ENCODE measurements at regions of chr4 and their contacts with region 1.

Region 1: GRCh38 chr4:81471588-81472288 is at the start of gene RASGEF1B:
- DNase-seq: peak; percentile 95 to 97 (median 96)
- H3K4me3 ChIP-seq: peak within 1 kb of the TSS; percentile 83 to 94
- H3K4me3 Mint-ChIP-seq: peak within 1 kb of the TSS; percentile 90 to 97 (median 95)
- H3K27ac ChIP-seq: peak within 1 kb of the TSS; percentile 83
- H3K27ac Mint-ChIP-seq: peak within 1 kb of the TSS; percentile 91 to 99 (median 98)
- H3K4me1 ChIP-seq: peaks cover 22% of the 10 kb centered on the region
- H3K4me1 Mint-ChIP-seq: peaks cover 25 to 47% (median 37%) of the 10 kb centered on the region in 4 donors
- H3K27me3 ChIP-seq: no peaks in the 10 kb centered on the region
- H3K27me3 Mint-ChIP-seq: no peaks in the 10 kb centered on the region
- total RNA-seq, gene RASGEF1B: 9.0 to 9.4 TPM

Region 2: GRCh38 chr4:80713409-80713808 is 758.3 kb before region 1 on chr4:
- CTCF ChIA-PET with region 1: no interaction called
- POLR2A ChIA-PET with region 1: no interaction called
- intact Hi-C with region 1: no loop called
- DNase-seq: no peak
- H3K4me3 ChIP-seq: no peak overlapping the region
- H3K4me3 Mint-ChIP-seq: no peak overlapping the region
- H3K27ac ChIP-seq: no peak overlapping the region
- H3K27ac Mint-ChIP-seq: no peak overlapping the region
- H3K4me1 ChIP-seq: peaks cover 5% of the 10 kb centered on the region
- H3K4me1 Mint-ChIP-seq: peaks cover 10 to 19% (median 13%) of the 10 kb centered on the region in 4 donors
- H3K27me3 ChIP-seq: no peaks in the 10 kb centered on the region
- H3K27me3 Mint-ChIP-seq: peaks cover 0 to 2% of the 10 kb centered on the region in 2 donors

Region 3: GRCh38 chr4:81494031-81494431 is 22.3 kb after region 1 on chr4:
- CTCF ChIA-PET with region 1: interaction called, 60 read pairs
- POLR2A ChIA-PET with region 1: interaction called, 103 read pairs
- intact Hi-C with region 1: loop called (anchors 1 kb)
- DNase-seq: peak in 2 of 5 donors; percentile 30 to 45
- H3K4me3 ChIP-seq: no peak overlapping the region
- H3K4me3 Mint-ChIP-seq: peak overlapping the region; percentile 73 to 88 (median 80)
- H3K27ac ChIP-seq: peak overlapping the region; percentile 59
- H3K27ac Mint-ChIP-seq: peak overlapping the region; percentile 84 to 96 (median 95)
- H3K4me1 ChIP-seq: peaks cover 41% of the 10 kb centered on the region
- H3K4me1 Mint-ChIP-seq: peaks cover 26 to 49% (median 39%) of the 10 kb centered on the region in 4 donors
- H3K27me3 ChIP-seq: no peaks in the 10 kb centered on the region
- H3K27me3 Mint-ChIP-seq: no peaks in the 10 kb centered on the region

Region 4: GRCh38 chr4:81599742-81600380 is 128.1 kb after region 1 on chr4:
- CTCF ChIA-PET with region 1: interaction called, 5 read pairs
- POLR2A ChIA-PET with region 1: no interaction called
- intact Hi-C with region 1: loop called (anchors 5 kb)
- DNase-seq: no peak
- H3K4me3 ChIP-seq: no peak overlapping the region
- H3K4me3 Mint-ChIP-seq: no peak overlapping the region
- H3K27ac ChIP-seq: no peak overlapping the region
- H3K27ac Mint-ChIP-seq: no peak overlapping the region
- H3K4me1 ChIP-seq: no peaks in the 10 kb centered on the region
- H3K4me1 Mint-ChIP-seq: no peaks in the 10 kb centered on the region
- H3K27me3 ChIP-seq: no peaks in the 10 kb centered on the region
- H3K27me3 Mint-ChIP-seq: peaks cover 4 to 7% of the 10 kb centered on the region in 2 donors

Region 5: GRCh38 chr4:81839347-81840042 is 367.8 kb after region 1 on chr4:
- CTCF ChIA-PET with region 1: interaction called, 249 read pairs
- POLR2A ChIA-PET with region 1: interaction called, 13 read pairs
- intact Hi-C with region 1: loop called (anchors 1 kb)
- DNase-seq: no peak
- H3K4me3 ChIP-seq: no peak overlapping the region
- H3K4me3 Mint-ChIP-seq: no peak overlapping the region
- H3K27ac ChIP-seq: no peak overlapping the region
- H3K27ac Mint-ChIP-seq: no peak overlapping the region
- H3K4me1 ChIP-seq: no peaks in the 10 kb centered on the region
- H3K4me1 Mint-ChIP-seq: no peaks in the 10 kb centered on the region
- H3K27me3 ChIP-seq: no peaks in the 10 kb centered on the region
- H3K27me3 Mint-ChIP-seq: peaks cover 0 to 1% of the 10 kb centered on the region in 2 donors

Region 6: DNA sequence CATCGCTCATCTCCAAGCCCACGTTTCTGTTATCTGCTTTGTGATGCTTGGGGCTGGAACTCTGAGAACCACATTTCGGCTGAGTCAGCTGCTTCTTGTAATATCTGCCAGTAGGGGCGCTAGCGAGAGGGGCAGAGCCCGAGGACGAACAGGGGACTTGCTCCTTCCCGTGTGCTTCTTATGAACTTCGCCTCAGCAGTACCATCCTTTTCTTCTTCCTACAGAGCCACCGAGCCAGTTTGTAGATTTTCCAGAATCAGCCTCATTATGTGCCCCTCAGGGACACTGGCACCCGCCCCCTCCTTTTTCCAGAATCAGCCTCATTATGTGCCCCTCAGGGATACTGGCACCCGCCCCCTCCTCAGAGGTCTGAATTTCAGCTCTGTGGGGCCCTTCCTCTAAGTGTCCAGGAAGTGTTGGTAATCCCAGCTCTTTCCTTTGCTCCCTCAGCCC is 441.7 kb after region 1 on chr4:
- CTCF ChIA-PET with region 1: interaction called, 3 read pairs
- POLR2A ChIA-PET with region 1: no interaction called
- intact Hi-C with region 1: loop called (anchors 1 kb)
- DNase-seq: peak; percentile 39 to 55 (median 52)
- H3K4me3 ChIP-seq: no peak overlapping the region
- H3K4me3 Mint-ChIP-seq: peak overlapping the region in 1 of 8 donors; percentile 50
- H3K27ac ChIP-seq: no peak overlapping the region
- H3K27ac Mint-ChIP-seq: no peak overlapping the region
- H3K4me1 ChIP-seq: no peaks in the 10 kb centered on the region
- H3K4me1 Mint-ChIP-seq: peaks cover 6 to 9% (median 7%) of the 10 kb centered on the region in 4 donors
- H3K27me3 ChIP-seq: no peaks in the 10 kb centered on the region
- H3K27me3 Mint-ChIP-seq: peaks cover 5 to 9% of the 10 kb centered on the region in 2 donors

Region 7: GRCh38 chr4:82284858-82285805 is 813.4 kb after region 1 on chr4:
- CTCF ChIA-PET with region 1: interaction called, 13 read pairs
- POLR2A ChIA-PET with region 1: interaction called, 13 read pairs
- intact Hi-C with region 1: loop called (anchors 1 kb)
- DNase-seq: peak; percentile 99
- H3K4me3 ChIP-seq: peak overlapping the region; percentile 25 to 70
- H3K4me3 Mint-ChIP-seq: peak overlapping the region; percentile 81 to 94 (median 86)
- H3K27ac ChIP-seq: peak overlapping the region; percentile 49
- H3K27ac Mint-ChIP-seq: peak overlapping the region; percentile 62 to 91 (median 88)
- H3K4me1 ChIP-seq: peaks cover 12% of the 10 kb centered on the region
- H3K4me1 Mint-ChIP-seq: peaks cover 8 to 19% (median 14%) of the 10 kb centered on the region in 4 donors
- H3K27me3 ChIP-seq: no peaks in the 10 kb centered on the region
- H3K27me3 Mint-ChIP-seq: no peaks in the 10 kb centered on the region

Region 8: DNA sequence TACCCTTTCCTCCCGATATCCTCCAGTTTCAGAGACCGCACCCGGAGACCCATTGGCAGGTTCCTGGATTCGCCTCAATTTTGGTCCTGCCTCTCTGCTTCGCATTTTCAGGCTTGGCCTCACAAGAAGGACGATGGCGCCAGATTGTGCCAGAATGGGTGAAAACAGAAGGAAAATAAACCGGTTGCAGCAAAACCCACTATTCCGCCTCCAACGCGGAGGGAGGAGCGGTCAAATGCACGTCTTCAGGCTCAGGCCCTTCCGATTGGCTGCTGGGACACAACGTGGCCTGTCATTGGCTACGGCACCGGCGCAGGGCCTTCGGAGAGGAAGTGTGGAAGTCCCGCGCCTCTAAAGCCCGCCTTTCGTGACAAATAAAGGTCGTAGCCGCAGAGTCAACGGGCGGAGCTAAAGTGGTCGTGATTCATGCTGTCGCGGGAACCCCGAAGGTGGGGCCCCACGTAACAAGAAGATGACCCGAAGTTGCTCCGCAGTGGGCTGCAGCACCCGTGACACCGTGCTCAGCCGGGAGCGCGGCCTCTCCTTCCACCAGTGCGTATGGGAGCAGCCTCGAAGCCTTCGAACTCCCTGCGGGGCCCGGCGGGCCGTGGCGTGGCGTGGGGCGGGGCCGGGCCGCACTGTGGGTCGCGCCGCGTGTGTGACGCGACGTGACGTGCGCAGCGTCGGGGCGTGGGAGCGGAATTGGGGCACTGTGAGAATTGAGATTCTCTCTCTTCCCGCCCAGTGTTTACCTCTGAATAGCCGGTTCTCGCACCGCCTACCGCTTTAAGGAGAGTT is 1428.8 kb after region 1 on chr4 and contains the start of gene THAP9:
- CTCF ChIA-PET with region 1: no interaction called
- POLR2A ChIA-PET with region 1: no interaction called
- intact Hi-C with region 1: loop called (anchors 5 kb)
- DNase-seq: peak; percentile 98 to 100 (median 99)
- H3K4me3 ChIP-seq: peak within 1 kb of the TSS; percentile 92 to 99
- H3K4me3 Mint-ChIP-seq: no peak within 1 kb of the TSS
- H3K27ac ChIP-seq: peak within 1 kb of the TSS; percentile 98
- H3K27ac Mint-ChIP-seq: no peak within 1 kb of the TSS
- H3K4me1 ChIP-seq: peaks cover 47% of the 10 kb centered on the region
- H3K4me1 Mint-ChIP-seq: peaks cover 10 to 20% (median 16%) of the 10 kb centered on the region in 4 donors
- H3K27me3 ChIP-seq: no peaks in the 10 kb centered on the region
- H3K27me3 Mint-ChIP-seq: no peaks in the 10 kb centered on the region
- total RNA-seq, gene THAP9: 2.7 to 3.7 TPM